ENCODE measurements at regions of chr2 and their contacts with region 1.

Region 1: DNA sequence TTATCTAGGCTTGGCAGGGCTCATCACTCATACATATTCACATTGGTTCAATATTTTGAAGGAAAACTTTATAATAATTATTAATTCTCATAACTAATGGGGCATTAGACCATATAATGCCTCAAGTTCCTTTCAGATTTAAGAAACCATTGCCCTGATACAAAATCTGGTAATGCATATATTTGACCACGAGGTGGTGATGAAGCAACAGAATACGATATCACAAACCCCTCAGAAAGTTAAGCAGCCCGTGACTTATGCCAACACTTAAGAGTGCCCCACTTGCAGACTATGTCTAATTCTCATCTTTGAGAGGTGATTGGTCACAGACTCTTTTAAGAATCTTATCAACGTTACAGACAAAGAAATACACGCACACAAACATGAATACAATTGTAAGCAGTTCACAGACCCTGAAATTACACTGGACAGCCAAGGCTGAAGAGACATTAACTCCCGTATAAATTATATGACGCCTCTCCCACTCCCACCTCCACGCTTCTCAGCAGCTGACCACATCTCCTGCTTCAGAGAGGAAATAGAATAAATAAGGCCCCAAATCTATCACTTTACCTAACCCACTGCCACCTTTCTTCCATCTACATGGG is 20.7 kb upstream of the DNAH6 start:
- DNase-seq: no peak

Region 2: DNA sequence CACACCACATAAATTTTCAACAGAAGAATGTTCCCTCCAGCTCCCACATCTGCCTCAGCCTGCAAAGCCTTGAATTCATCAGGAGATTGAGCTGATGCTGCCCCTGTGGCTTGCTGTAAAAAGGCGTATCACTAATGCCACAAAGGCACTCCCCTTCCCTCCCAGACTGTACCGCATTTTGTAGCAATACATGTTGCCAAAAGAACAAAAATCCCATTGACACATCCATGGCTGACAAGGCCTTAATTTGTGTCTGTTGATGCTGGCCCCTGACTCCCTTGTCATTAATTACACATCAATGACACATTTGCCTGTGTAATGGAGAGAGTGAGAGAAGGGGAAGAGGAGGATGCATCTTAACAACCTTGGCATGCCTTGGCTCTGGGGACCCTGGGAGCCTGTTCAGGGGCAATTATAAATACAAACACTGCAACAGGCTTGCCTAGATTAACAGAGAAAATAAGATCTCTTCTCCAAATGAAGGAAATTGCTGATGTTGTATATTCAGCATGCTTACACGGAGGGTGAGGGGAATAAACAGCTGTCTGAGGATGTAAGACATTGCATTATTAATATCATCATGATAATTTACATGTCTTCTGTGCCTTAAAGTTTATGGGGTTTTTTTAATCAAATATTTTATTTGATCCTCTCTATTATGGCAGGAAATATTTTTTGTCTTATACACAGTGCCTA is 300.5 kb before region 1 on chr2:
- intact Hi-C with region 1: no loop called
- DNase-seq: no peak

Region 3: DNA sequence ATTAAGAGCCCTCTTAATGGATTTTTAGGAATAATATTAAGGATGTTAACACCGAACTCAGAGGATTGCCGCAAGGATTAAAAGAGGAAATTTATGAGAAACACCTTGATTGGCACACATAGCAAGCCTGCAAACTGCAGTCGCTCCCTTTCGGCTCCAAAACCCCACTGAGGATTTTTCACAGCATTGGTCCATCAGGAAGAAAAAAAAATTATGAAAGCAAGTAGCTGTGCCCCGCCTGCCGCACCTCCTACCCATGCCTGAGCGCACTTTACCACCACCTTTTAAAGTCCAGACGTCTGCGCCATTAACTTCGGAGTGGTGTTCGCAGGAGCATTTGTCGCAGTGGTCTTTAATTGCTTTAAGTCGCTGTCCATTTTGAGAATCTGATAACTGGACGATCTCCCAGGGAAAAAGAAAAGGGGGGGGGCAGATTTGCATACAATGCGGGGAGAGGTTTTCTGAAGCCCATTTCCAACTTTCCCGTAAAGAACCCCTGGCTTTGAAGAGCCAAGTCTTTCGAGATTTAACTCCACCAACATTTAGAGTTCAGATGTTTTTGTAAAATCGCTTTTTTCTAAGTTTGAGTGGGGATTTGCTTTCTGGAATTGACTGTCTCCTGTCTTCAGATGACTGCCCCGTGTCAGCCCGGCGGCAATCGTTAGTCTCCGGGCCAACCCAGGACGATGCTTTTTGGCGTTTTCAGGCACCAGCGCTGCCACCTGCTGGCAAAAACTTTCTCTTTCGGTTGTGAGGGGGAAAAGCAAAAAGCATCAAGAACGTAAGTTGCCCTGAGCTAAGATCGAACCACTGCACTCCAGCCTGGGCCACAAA is 386.2 kb after region 1 on chr2:
- intact Hi-C with region 1: loop called in 1 of 2 experiments (anchors 10 kb)
- DNase-seq: peak; percentile 91